CD4-positive, alpha-beta memory T cell (primary cell): ENCODE measurements at regions of chr15 and their contacts with region 1.

Region 1: GRCh38 chr15:84716036-84716799 is at the start of gene SEC11A:
- DNase-seq: peak; percentile 89 to 95 (median 92)
- H3K4me3 ChIP-seq: peak within 1 kb of the TSS; percentile 91 to 97
- H3K4me3 Mint-ChIP-seq: peak within 1 kb of the TSS; percentile 94 to 100 (median 96)
- H3K27ac ChIP-seq: peak within 1 kb of the TSS; percentile 85
- H3K27ac Mint-ChIP-seq: peak within 1 kb of the TSS; percentile 88 to 99 (median 97)
- H3K4me1 ChIP-seq: peaks cover 55% of the 10 kb centered on the region
- H3K4me1 Mint-ChIP-seq: peaks cover 33 to 66% (median 45%) of the 10 kb centered on the region in 4 donors
- H3K27me3 ChIP-seq: no peaks in the 10 kb centered on the region
- H3K27me3 Mint-ChIP-seq: no peaks in the 10 kb centered on the region
- total RNA-seq, gene SEC11A: 85.0 to 86.8 TPM

Region 2: GRCh38 chr15:84600851-84601838 is 115.1 kb before region 1 on chr15 and contains the start of gene ZSCAN2:
- CTCF ChIA-PET with region 1: no interaction called
- POLR2A ChIA-PET with region 1: interaction called, 13 read pairs
- intact Hi-C with region 1: no loop called
- DNase-seq: peak; percentile 89 to 94 (median 91)
- H3K4me3 ChIP-seq: peak within 1 kb of the TSS; percentile 85 to 93
- H3K4me3 Mint-ChIP-seq: peak within 1 kb of the TSS; percentile 91 to 99 (median 96)
- H3K27ac ChIP-seq: peak within 1 kb of the TSS; percentile 59
- H3K27ac Mint-ChIP-seq: peak within 1 kb of the TSS; percentile 83 to 96 (median 92)
- H3K4me1 ChIP-seq: peaks cover 50% of the 10 kb centered on the region
- H3K4me1 Mint-ChIP-seq: peaks cover 47 to 77% (median 64%) of the 10 kb centered on the region in 4 donors
- H3K27me3 ChIP-seq: no peaks in the 10 kb centered on the region
- H3K27me3 Mint-ChIP-seq: no peaks in the 10 kb centered on the region
- total RNA-seq, gene ZSCAN2: 11.4 to 14.1 TPM

Region 3: GRCh38 chr15:84681831-84682230 is 34.4 kb before region 1 on chr15:
- CTCF ChIA-PET with region 1: interaction called, 9 read pairs
- POLR2A ChIA-PET with region 1: interaction called, 18 read pairs
- intact Hi-C with region 1: no loop called
- DNase-seq: peak; percentile 51 to 88 (median 60)
- H3K4me3 ChIP-seq: no peak overlapping the region
- H3K4me3 Mint-ChIP-seq: no peak overlapping the region
- H3K27ac ChIP-seq: no peak overlapping the region
- H3K27ac Mint-ChIP-seq: peak overlapping the region; percentile 70 to 93 (median 89)
- H3K4me1 ChIP-seq: peaks cover 9% of the 10 kb centered on the region
- H3K4me1 Mint-ChIP-seq: peaks cover 10 to 21% (median 14%) of the 10 kb centered on the region in 4 donors
- H3K27me3 ChIP-seq: no peaks in the 10 kb centered on the region
- H3K27me3 Mint-ChIP-seq: no peaks in the 10 kb centered on the region

Region 4: DNA sequence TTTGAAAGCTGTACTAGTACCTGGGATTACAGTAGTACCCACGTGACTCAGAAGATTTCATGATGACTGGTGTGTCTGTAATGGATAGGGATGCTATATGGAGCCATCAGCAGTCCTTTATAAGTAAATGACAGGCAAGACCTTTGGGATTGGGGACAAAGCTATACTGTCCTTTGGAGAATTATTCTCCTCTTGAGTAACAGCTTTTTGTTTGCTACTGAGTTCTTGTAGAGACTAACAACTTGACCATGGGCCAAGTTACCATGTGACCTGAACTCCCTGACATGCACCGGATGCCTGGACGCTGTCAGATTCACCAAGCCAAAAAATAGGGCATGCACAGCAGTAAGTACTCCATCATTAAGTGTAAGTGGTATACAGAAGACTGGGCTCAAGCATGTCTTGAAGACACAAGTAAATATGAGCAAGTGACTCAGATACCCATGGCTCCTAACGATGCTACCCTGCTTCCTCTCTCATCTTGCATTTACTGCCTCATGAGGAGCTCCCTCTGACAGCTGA is 13.2 kb before region 1 on chr15:
- CTCF ChIA-PET with region 1: interaction called, 7 read pairs
- POLR2A ChIA-PET with region 1: interaction called, 30 read pairs
- intact Hi-C with region 1: no loop called
- DNase-seq: no peak
- H3K4me3 ChIP-seq: no peak overlapping the region
- H3K4me3 Mint-ChIP-seq: peak overlapping the region in 4 of 8 donors; percentile 2 to 16 (median 9)
- H3K27ac ChIP-seq: no peak overlapping the region
- H3K27ac Mint-ChIP-seq: peak overlapping the region in 6 of 7 donors; percentile 22 to 77 (median 50)
- H3K4me1 ChIP-seq: peaks cover 61% of the 10 kb centered on the region
- H3K4me1 Mint-ChIP-seq: peaks cover 47 to 81% (median 61%) of the 10 kb centered on the region in 4 donors
- H3K27me3 ChIP-seq: no peaks in the 10 kb centered on the region
- H3K27me3 Mint-ChIP-seq: no peaks in the 10 kb centered on the region

Region 5: GRCh38 chr15:84748274-84749110 is 32.3 kb after region 1 on chr15 and contains the start of gene ZNF592:
- CTCF ChIA-PET with region 1: interaction called, 27 read pairs
- POLR2A ChIA-PET with region 1: interaction called, 522 read pairs
- intact Hi-C with region 1: loop called (anchors 1 kb)
- DNase-seq: peak; percentile 78 to 87 (median 80)
- H3K4me3 ChIP-seq: peak within 1 kb of the TSS; percentile 88 to 93
- H3K4me3 Mint-ChIP-seq: peak within 1 kb of the TSS; percentile 93 to 99 (median 98)
- H3K27ac ChIP-seq: peak within 1 kb of the TSS; percentile 80
- H3K27ac Mint-ChIP-seq: peak within 1 kb of the TSS; percentile 97 to 99 (median 99)
- H3K4me1 ChIP-seq: peaks cover 68% of the 10 kb centered on the region
- H3K4me1 Mint-ChIP-seq: peaks cover 52 to 74% (median 64%) of the 10 kb centered on the region in 4 donors
- H3K27me3 ChIP-seq: no peaks in the 10 kb centered on the region
- H3K27me3 Mint-ChIP-seq: no peaks in the 10 kb centered on the region
- total RNA-seq, gene ZNF592: 40.8 to 42.6 TPM

Region 6: DNA sequence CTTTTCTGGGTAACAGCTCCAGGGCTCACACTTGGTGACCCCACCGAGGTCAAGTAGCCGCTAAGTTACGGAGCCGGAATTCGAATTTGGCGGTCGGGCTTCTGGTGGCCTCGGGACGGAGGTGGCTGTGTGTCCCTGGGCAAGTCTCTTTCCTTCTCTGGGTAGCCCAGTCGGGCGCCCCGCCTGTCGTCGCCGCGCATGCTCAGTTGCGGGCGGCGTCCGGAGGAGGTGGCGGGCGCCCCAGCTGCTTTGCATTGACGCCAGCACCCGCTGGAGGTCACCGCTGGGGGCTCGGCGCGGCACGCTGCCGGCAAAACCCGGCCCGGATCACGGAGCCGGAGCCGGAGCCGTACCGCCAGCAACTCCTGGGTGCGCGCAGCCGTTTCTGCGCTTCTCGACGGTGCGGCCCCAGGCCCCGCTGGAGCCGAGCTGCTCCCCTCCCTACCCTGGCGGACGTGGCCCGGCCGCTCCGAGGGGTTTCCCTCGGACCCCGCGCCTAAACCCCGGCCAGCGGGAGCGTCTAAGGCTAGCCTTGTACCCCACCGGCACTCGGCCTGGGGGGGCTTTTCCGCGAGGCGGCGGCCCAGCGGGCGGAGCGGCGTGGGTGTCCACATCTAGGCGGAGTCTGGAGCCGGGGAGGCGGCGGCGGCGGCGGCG is 265.0 kb after region 1 on chr15:
- CTCF ChIA-PET with region 1: no interaction called
- POLR2A ChIA-PET with region 1: interaction called, 11 read pairs
- intact Hi-C with region 1: no loop called
- DNase-seq: peak; percentile 95 to 99 (median 98)
- H3K4me3 ChIP-seq: peak overlapping the region; percentile 43 to 86
- H3K4me3 Mint-ChIP-seq: peak overlapping the region; percentile 89 to 98 (median 95)
- H3K27ac ChIP-seq: peak overlapping the region; percentile 83
- H3K27ac Mint-ChIP-seq: peak overlapping the region; percentile 94 to 98 (median 97)
- H3K4me1 ChIP-seq: peaks cover 42% of the 10 kb centered on the region
- H3K4me1 Mint-ChIP-seq: peaks cover 24 to 51% (median 38%) of the 10 kb centered on the region in 4 donors
- H3K27me3 ChIP-seq: no peaks in the 10 kb centered on the region
- H3K27me3 Mint-ChIP-seq: no peaks in the 10 kb centered on the region